Esophagus muscularis mucosa (tissue), 4 donors: ENCODE measurements at regions of chr7 and their contacts with region 1.

Region 1: GRCh38 chr7:47635091-47636080 is 53.5 kb upstream of the TNS3 start:
- DNase-seq: no peak
- H3K4me3 ChIP-seq: peak overlapping the region in 2 of 4 donors; percentile 7 to 21
- H3K27ac ChIP-seq: peak overlapping the region; percentile 60 to 83 (median 78)
- H3K4me1 ChIP-seq: peaks cover 26 to 70% (median 64%) of the 10 kb centered on the region in 4 donors
- H3K27me3 ChIP-seq: no peaks in the 10 kb centered on the region
- CTCF ChIP-seq: no peak
- EP300 ChIP-seq: no peak
- POLR2A ChIP-seq: no peak

Region 2: GRCh38 chr7:47513741-47514241 is 121.6 kb before region 1 on chr7:
- intact Hi-C with region 1: loop called (anchors 10 kb)
- DNase-seq: no peak
- H3K4me3 ChIP-seq: no peak overlapping the region
- H3K27ac ChIP-seq: peak overlapping the region; percentile 27 to 62 (median 38)
- H3K4me1 ChIP-seq: peaks cover 29 to 59% (median 44%) of the 10 kb centered on the region in 4 donors
- H3K27me3 ChIP-seq: no peaks in the 10 kb centered on the region
- CTCF ChIP-seq: no peak
- EP300 ChIP-seq: no peak
- POLR2A ChIP-seq: no peak

Region 3: DNA sequence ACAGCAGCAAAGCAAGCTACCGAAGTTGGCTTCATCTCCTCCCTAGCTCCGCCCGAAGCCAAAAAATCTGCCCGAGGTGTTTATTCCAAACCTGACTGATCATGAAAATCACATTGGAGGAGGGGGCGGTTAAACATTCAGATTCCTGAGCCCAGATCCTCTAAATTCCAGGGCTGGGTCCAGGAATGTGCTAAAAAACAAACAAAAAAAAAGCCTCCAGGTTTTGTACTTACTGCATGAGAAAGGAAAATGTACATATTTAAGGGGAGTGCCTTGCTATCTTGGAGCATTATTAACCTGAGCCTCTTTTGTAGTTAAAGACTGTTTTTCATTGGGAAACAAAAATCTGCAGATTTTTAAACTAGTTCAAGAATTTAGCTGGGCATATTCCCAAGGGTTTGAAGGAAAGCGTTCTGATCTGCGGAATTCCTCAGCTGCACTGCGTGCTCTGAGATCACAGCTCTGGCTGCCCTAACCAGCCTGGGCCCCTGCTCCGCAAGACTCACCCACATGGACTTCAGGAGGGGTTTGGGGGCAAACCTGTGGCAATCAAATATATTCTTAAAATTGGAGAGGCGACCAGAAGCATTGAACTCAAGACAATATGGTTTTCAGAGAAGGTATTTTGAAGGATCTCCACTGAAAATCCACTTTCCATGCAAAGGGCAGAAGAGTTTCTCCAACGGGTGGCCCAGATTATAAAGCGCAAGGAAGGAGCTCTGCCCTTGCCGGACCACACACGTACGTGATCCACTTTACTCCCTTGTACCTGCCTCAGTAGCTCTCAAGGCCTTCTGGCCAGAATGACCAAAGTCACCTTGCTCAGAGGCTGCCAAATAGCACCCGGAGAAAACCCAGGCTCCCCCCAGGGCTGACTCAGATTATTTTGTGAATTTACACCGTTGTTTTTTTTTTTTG is 43.5 kb before region 1 on chr7:
- intact Hi-C with region 1: loop called (anchors 5 kb)
- DNase-seq: no peak
- H3K4me3 ChIP-seq: no peak overlapping the region
- H3K27ac ChIP-seq: peak overlapping the region in 3 of 4 donors; percentile 22 to 35 (median 31)
- H3K4me1 ChIP-seq: peaks cover 3 to 46% (median 37%) of the 10 kb centered on the region in 4 donors
- H3K27me3 ChIP-seq: no peaks in the 10 kb centered on the region
- CTCF ChIP-seq: no peak
- EP300 ChIP-seq: no peak
- POLR2A ChIP-seq: no peak

Region 4: GRCh38 chr7:47751043-47751442 is 115.7 kb after region 1 on chr7:
- intact Hi-C with region 1: no loop called
- DNase-seq: no peak
- H3K4me3 ChIP-seq: no peak overlapping the region
- H3K27ac ChIP-seq: no peak overlapping the region
- H3K4me1 ChIP-seq: no peaks in the 10 kb centered on the region
- H3K27me3 ChIP-seq: no peaks in the 10 kb centered on the region
- CTCF ChIP-seq: no peak
- EP300 ChIP-seq: no peak
- POLR2A ChIP-seq: no peak

Region 5: GRCh38 chr7:47771336-47771989 is 136.1 kb after region 1 on chr7:
- intact Hi-C with region 1: loop called (anchors 10 kb)
- DNase-seq: no peak
- H3K4me3 ChIP-seq: no peak overlapping the region
- H3K27ac ChIP-seq: peak overlapping the region; percentile 39 to 72 (median 61)
- H3K4me1 ChIP-seq: peaks cover 0 to 31% (median 22%) of the 10 kb centered on the region in 4 donors
- H3K27me3 ChIP-seq: no peaks in the 10 kb centered on the region
- CTCF ChIP-seq: peak in 1 of 3 experiments; percentile 43
- EP300 ChIP-seq: no peak
- POLR2A ChIP-seq: no peak